Panc1 (cell line): ENCODE measurements at regions of chr3 and their contacts with region 1.

Region 1: DNA sequence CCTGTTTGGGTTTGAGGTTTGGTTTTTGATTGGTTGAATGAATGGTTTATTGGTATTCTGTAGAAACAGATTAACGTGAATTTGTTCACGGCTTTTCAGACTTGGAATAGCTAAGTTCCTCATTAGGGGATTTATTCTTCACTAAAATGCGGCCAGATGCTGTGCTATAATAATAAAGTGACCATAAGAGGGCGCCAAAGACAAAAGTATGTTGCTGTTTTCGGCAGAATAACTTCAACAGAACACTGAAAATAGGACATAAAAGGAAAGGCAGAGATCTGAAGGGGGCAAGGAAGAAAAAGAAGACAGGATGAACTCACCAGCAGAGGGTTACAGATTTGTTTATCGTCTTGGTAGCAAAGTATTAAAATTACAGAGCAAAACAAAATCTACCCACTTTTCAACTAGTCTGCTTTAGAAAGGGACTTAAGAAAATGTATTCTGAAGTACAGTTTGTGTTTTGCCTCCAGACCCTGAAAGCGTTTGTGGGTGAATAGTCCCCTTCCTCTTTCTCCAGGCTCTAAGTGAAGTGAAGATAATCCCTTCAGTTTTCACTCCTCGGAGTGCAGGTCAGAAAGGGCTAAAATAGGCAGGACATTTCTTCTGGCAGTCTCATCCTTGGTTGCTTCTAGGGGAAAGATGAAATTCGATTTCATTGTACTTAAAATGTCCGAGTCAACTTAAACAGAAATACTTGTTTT is 147.6 kb downstream of the IL20RB start:
- DNase-seq: peak; percentile 55
- ATAC-seq: peak; percentile 88
- H3K4me3 ChIP-seq: no peak overlapping the region
- H3K27ac ChIP-seq: no peak overlapping the region
- H3K4me1 ChIP-seq: no peaks in the 10 kb centered on the region
- H3K27me3 ChIP-seq: peaks cover 31% of the 10 kb centered on the region
- CTCF ChIP-seq: peak; percentile 78

Region 2: GRCh38 chr3:137032465-137033120 is 72.8 kb before region 1 on chr3:
- CTCF ChIA-PET with region 1: interaction called, 5 read pairs
- POLR2A ChIA-PET with region 1: no interaction called
- in situ Hi-C with region 1: no loop called
- intact Hi-C with region 1: loop called (anchors 5 kb)
- DNase-seq: peak; percentile 79
- ATAC-seq: peak; percentile 91
- H3K4me3 ChIP-seq: peak overlapping the region; percentile 13 to 17; a peak in 3 of 4 replicates
- H3K27ac ChIP-seq: no peak overlapping the region
- H3K4me1 ChIP-seq: peaks cover 6% of the 10 kb centered on the region; the same call in 1 of the 2 replicates
- H3K27me3 ChIP-seq: peaks cover 8% of the 10 kb centered on the region; the same call in 1 of the 2 replicates
- CTCF ChIP-seq: peak; percentile 97

Region 3: DNA sequence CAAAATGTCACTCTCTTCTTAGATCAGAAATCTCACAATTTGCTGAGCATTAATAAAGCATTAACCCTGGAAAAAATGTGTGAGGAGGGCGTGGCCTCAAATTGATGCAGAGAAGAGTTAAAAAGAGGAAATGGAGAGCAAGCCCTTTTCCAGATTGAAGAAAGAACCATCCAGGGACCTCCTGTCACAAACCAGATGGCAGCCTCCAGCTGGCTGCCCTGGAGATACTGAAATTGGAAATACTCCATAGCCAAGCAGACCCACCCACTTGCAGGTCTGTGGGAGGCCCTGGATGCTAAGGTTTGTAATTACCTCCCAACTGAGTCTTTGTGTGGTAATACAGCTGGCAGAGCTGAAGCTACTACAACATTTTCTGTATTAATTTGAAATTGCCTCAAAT is 67.3 kb after region 1 on chr3:
- CTCF ChIA-PET with region 1: no interaction called
- POLR2A ChIA-PET with region 1: no interaction called
- in situ Hi-C with region 1: no loop called
- intact Hi-C with region 1: no loop called
- DNase-seq: no peak
- ATAC-seq: no peak
- H3K4me3 ChIP-seq: no peak overlapping the region
- H3K27ac ChIP-seq: no peak overlapping the region
- H3K4me1 ChIP-seq: no peaks in the 10 kb centered on the region
- H3K27me3 ChIP-seq: peaks cover 2% of the 10 kb centered on the region; the same call in 1 of the 2 replicates
- CTCF ChIP-seq: no peak

Region 4: DNA sequence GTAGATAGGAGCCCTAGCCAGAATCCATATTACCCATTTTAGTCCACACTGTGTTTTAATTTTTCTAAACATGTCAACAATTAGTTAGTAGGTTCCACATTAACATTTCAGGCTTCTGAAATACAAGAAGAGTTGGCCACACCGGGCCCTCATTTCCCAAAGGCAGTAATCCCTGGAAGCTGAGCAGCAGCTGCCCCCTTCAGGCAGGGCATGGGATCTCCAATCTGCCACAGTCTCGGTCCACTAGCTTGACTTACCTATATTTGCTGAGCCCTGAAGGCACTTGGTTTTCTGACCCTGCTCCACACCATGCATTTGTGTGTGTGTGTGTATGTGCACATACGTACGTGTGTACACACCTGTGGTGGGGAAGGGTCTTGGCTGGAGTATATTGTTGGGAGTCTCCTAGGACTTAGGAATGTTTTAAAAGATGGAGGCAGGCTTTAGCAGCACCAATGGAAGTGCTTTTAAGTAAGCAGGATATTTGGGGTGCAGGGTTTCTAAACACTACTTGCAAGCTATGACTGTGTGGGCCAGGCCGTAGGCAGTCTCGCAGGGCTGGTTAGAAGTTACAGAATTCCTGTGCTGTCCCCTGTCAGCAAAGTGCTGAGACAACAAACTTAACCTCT is 587.5 kb after region 1 on chr3:
- CTCF ChIA-PET with region 1: interaction called, 6 read pairs
- POLR2A ChIA-PET with region 1: no interaction called
- in situ Hi-C with region 1: no loop called
- intact Hi-C with region 1: loop called (anchors 2 kb)
- DNase-seq: no peak
- ATAC-seq: peak; percentile 84
- H3K4me3 ChIP-seq: no peak overlapping the region
- H3K27ac ChIP-seq: no peak overlapping the region
- H3K4me1 ChIP-seq: no peaks in the 10 kb centered on the region
- H3K27me3 ChIP-seq: peaks cover 4% of the 10 kb centered on the region; the same call in 1 of the 2 replicates
- CTCF ChIP-seq: peak; percentile 84

Region 5: GRCh38 chr3:137792626-137793271 is 687.3 kb after region 1 on chr3:
- CTCF ChIA-PET with region 1: no interaction called
- POLR2A ChIA-PET with region 1: no interaction called
- in situ Hi-C with region 1: no loop called
- intact Hi-C with region 1: loop called (anchors 5 kb)
- DNase-seq: peak; percentile 28
- ATAC-seq: no peak
- H3K4me3 ChIP-seq: no peak overlapping the region
- H3K27ac ChIP-seq: no peak overlapping the region
- H3K4me1 ChIP-seq: no peaks in the 10 kb centered on the region
- H3K27me3 ChIP-seq: peaks cover 10% of the 10 kb centered on the region; the same call in 1 of the 2 replicates
- CTCF ChIP-seq: peak; percentile 82

Region 6: GRCh38 chr3:137946345-137946973 is 841.0 kb after region 1 on chr3:
- CTCF ChIA-PET with region 1: interaction called, 4 read pairs
- POLR2A ChIA-PET with region 1: no interaction called
- in situ Hi-C with region 1: no loop called
- intact Hi-C with region 1: loop called (anchors 5 kb)
- DNase-seq: no peak
- ATAC-seq: peak; percentile 83
- H3K4me3 ChIP-seq: no peak overlapping the region
- H3K27ac ChIP-seq: no peak overlapping the region
- H3K4me1 ChIP-seq: no peaks in the 10 kb centered on the region
- H3K27me3 ChIP-seq: no peaks in the 10 kb centered on the region; the same call in 1 of the 2 replicates
- CTCF ChIP-seq: peak; percentile 91

Region 7: GRCh38 chr3:137970914-137971831 is 865.7 kb after region 1 on chr3:
- CTCF ChIA-PET with region 1: no interaction called
- POLR2A ChIA-PET with region 1: no interaction called
- in situ Hi-C with region 1: no loop called
- intact Hi-C with region 1: loop called (anchors 2 kb)
- DNase-seq: no peak
- ATAC-seq: peak; percentile 100
- H3K4me3 ChIP-seq: no peak overlapping the region
- H3K27ac ChIP-seq: no peak overlapping the region
- H3K4me1 ChIP-seq: peaks cover 2% of the 10 kb centered on the region; the same call in 1 of the 2 replicates
- H3K27me3 ChIP-seq: peaks cover 6% of the 10 kb centered on the region; the same call in 1 of the 2 replicates
- CTCF ChIP-seq: peak; percentile 97

Region 8: DNA sequence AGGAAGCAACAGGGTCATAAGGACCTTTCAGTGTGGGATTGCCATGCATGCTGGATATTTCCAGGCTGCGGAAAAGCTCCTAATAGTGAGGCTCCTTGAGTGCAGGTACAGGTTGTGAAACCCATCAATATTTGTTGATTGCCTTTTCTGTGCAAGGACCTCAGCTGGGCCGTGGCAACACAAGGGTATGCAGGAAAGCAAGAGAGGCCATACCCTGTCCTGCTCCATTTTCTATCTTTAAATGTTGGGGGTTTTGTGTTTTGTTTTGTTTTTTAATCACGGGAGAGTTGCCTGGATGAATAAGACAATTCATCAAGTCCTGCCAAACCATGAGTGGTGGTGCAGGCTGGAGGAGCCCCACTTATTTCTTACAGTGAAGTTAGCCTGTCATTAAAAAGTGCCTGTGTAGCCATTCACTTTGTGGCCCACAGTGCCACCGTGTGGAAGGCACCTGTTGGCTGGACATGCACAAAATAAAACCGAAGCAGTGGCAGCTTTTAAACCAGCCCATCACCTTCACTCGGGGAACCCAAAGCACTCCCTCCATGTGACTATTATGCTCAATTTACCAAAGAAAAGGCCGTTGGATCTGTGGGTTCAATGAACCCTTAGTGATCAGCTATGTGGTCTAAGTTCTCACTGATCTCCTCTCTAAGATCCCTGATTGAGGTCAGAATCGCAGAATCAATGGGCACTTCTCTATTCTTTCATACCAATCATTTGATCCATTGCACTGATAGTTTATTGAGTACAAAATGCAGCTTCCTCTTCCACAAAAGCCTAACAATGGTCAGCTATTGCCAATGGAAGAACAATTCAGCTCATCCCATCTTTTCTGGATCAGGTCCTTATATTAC is 946.7 kb after region 1 on chr3:
- CTCF ChIA-PET with region 1: interaction called, 6 read pairs
- POLR2A ChIA-PET with region 1: no interaction called
- in situ Hi-C with region 1: no loop called
- intact Hi-C with region 1: loop called (anchors 5 kb)
- DNase-seq: peak; percentile 36
- ATAC-seq: peak; percentile 96
- H3K4me3 ChIP-seq: no peak overlapping the region
- H3K27ac ChIP-seq: no peak overlapping the region
- H3K4me1 ChIP-seq: no peaks in the 10 kb centered on the region
- H3K27me3 ChIP-seq: no peaks in the 10 kb centered on the region
- CTCF ChIP-seq: peak; percentile 94